Heart left ventricle (tissue), 16 donors: ENCODE measurements at regions of chr6 and their contacts with region 1.

Region 1: DNA sequence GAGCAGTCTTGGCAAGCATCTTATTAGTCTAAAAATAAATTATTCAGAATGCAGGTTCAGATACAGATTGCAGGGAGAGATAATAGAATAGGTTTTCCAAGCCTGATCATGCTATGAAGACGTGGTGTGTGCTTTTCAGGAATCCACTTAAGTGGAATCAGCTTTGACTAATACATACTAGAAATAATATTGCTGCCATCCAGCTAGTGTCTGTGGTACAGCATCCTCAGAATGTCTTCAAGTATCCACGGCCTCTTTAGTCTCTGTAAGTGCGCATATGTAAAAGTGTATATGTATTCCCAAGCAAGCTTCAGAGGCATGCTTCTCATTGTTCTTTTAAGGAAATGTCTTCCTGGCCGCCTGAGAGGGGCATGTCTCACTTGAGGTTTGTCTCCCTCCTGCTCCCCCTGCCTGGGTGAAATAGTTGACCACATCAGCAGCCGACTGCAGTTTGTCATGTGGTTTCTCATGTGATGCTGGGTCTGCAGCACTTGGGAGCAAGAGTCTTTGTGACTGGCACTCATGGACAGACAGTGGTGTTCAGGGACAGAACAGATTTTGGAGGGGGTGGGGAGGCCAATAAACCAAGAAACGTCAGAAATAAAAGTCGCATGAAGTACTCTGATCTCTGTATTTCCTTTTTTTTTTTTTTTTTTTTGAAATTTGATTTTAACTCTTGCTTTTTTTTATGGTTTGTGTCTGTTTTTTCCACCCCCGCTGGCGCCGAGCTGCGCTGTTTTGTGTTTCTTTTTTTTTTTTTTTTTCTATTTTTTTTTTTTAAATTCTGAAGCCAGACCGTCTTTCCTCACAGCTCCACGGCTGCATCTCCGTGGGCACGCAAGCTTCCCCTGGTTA is 150.8 kb downstream of the PRL start:
- DNase-seq: peak in 2 of 5 donors; percentile 25 to 27
- ATAC-seq: peak in 2 of 4 donors; percentile 42 to 46
- H3K4me3 ChIP-seq: peak overlapping the region in 9 of 12 donors; percentile 26 to 50 (median 40)
- H3K27ac ChIP-seq: peak overlapping the region in 1 of 12 donors; percentile 30
- H3K4me1 ChIP-seq: peaks cover 0 to 75% (median 50%) of the 10 kb centered on the region in 12 donors
- H3K27me3 ChIP-seq: no peaks in the 10 kb centered on the region
- CTCF ChIP-seq: peak in 8 of 12 donors; percentile 25 to 63 (median 43)
- POLR2A ChIP-seq: no peak

Region 2: DNA sequence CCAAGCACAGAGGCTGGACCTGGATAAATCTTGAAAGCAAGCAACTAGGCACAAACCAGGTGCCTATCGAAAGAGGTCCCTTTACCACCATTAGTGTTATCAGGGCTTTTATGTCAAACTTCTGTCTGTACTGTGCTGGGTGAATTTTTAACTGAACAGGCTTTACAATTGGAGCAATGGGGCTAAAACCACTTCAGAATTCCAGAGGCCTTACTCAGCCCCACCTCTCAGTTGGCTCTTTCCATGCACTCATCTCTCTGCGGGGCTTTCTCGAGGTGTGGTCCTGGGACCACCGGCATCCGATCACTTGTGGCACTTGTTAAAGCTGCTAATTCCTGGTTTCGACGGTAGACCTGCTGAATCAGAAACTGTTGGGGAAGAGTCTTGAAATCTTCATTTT is 320.0 kb before region 1 on chr6:
- intact Hi-C with region 1: no loop called
- DNase-seq: no peak
- ATAC-seq: no peak
- H3K4me3 ChIP-seq: no peak overlapping the region
- H3K27ac ChIP-seq: no peak overlapping the region
- H3K4me1 ChIP-seq: no peaks in the 10 kb centered on the region
- H3K27me3 ChIP-seq: no peaks in the 10 kb centered on the region
- CTCF ChIP-seq: no peak
- POLR2A ChIP-seq: no peak

Region 3: GRCh38 chr6:21987501-21987957 is 158.5 kb before region 1 on chr6:
- intact Hi-C with region 1: loop called in 3 of 10 experiments (anchors 5 to 10 kb)
- DNase-seq: peak; percentile 68 to 83 (median 80)
- ATAC-seq: peak; percentile 96 to 99 (median 98)
- H3K4me3 ChIP-seq: peak overlapping the region in 9 of 12 donors; percentile 5 to 42 (median 27)
- H3K27ac ChIP-seq: peak overlapping the region in 11 of 12 donors; percentile 35 to 83 (median 74)
- H3K4me1 ChIP-seq: peaks cover 0 to 33% (median 15%) of the 10 kb centered on the region in 12 donors
- H3K27me3 ChIP-seq: no peaks in the 10 kb centered on the region
- CTCF ChIP-seq: no peak
- POLR2A ChIP-seq: no peak

Region 4: GRCh38 chr6:22008248-22008836 is 137.7 kb before region 1 on chr6:
- intact Hi-C with region 1: no loop called
- DNase-seq: no peak
- ATAC-seq: no peak
- H3K4me3 ChIP-seq: no peak overlapping the region
- H3K27ac ChIP-seq: no peak overlapping the region
- H3K4me1 ChIP-seq: no peaks in the 10 kb centered on the region
- H3K27me3 ChIP-seq: no peaks in the 10 kb centered on the region
- CTCF ChIP-seq: no peak
- POLR2A ChIP-seq: no peak

Region 5: GRCh38 chr6:22043284-22043962 is 102.6 kb before region 1 on chr6:
- intact Hi-C with region 1: no loop called
- DNase-seq: peak in 4 of 5 donors; percentile 33 to 43 (median 36)
- ATAC-seq: peak; percentile 77 to 92 (median 88)
- H3K4me3 ChIP-seq: peak overlapping the region in 7 of 12 donors; percentile 14 to 42 (median 35)
- H3K27ac ChIP-seq: peak overlapping the region; percentile 29 to 80 (median 62)
- H3K4me1 ChIP-seq: peaks cover 0 to 30% (median 18%) of the 10 kb centered on the region in 12 donors
- H3K27me3 ChIP-seq: no peaks in the 10 kb centered on the region
- CTCF ChIP-seq: no peak
- POLR2A ChIP-seq: no peak

Region 6: DNA sequence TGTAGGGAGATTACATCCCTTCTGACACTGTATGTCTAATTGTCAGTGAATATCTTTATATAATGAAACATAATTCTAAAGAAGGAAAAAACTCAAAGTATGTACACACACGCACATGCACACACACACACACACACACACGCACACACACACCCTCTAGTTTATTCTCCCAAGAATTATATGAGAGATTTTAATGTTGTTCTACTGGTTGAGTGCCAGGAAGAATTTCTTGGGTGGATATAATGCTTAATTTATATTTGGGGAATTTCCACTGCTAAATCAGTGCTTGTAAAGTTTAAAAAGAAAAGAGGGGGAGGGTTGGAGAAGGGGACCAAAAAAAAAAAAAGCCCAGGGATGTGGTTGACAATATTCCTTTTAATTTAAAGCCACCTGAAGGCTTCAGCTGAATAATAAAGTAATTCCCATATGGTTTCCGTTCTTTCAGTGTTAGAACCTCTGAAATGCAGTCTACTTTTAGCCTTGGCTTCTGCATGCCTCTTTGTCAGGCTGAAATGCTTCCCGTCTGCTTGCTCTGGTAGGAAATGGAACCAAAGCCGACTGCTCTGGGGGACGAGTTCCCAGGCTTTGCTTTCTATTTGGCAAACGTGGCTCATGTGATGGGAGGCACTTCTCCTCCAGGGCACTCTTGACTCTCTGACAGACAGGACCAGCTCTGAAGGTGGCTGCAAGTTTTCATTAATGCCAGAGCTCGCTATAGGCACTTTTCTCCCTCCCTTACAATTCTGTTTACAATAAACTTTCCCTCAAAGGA is 74.6 kb before region 1 on chr6:
- intact Hi-C with region 1: loop called in 1 of 10 experiments (anchors 2 kb)
- DNase-seq: peak in 4 of 5 donors; percentile 57 to 75 (median 59)
- ATAC-seq: peak; percentile 79 to 94 (median 86)
- H3K4me3 ChIP-seq: peak overlapping the region in 9 of 12 donors; percentile 1 to 51 (median 24)
- H3K27ac ChIP-seq: peak overlapping the region; percentile 29 to 82 (median 66)
- H3K4me1 ChIP-seq: peaks cover 0 to 48% (median 19%) of the 10 kb centered on the region in 12 donors
- H3K27me3 ChIP-seq: no peaks in the 10 kb centered on the region
- CTCF ChIP-seq: no peak
- POLR2A ChIP-seq: no peak

Region 7: GRCh38 chr6:22239261-22239921 is 93.3 kb after region 1 on chr6:
- intact Hi-C with region 1: no loop called
- DNase-seq: no peak
- ATAC-seq: no peak
- H3K4me3 ChIP-seq: no peak overlapping the region
- H3K27ac ChIP-seq: no peak overlapping the region
- H3K4me1 ChIP-seq: no peaks in the 10 kb centered on the region
- H3K27me3 ChIP-seq: no peaks in the 10 kb centered on the region
- CTCF ChIP-seq: no peak
- POLR2A ChIP-seq: no peak

Region 8: DNA sequence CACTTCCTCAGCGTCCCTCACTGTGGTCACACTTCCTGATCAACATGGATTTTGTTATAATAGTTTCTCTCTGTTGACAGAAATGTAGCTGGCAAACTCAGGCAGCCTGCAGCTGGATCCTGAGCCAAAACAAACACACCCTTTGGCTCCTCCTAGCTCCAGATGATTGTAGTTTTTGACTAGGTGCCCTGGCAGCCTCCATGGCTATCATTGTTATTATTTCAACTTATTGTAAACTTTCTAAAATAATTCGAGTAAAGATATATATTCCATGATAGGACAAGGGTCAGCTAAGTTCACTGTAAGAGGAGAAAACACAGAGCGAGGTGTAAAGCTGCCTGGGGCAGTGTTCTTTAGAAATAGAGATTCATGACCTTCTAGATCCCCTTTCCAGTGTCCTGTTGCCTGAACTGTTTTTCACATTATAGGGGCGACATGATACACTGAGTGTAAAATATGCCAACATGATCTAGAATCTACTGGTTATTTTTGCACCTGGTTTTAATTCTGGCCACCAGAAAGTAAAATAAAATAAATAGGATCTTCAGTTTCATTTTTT is 325.2 kb after region 1 on chr6:
- intact Hi-C with region 1: loop called in 1 of 10 experiments (anchors 10 kb)
- DNase-seq: peak in 4 of 5 donors; percentile 38 to 69 (median 63)
- ATAC-seq: peak; percentile 85 to 93 (median 87)
- H3K4me3 ChIP-seq: peak overlapping the region in 2 of 12 donors; percentile 2 to 4
- H3K27ac ChIP-seq: peak overlapping the region in 11 of 12 donors; percentile 22 to 70 (median 40)
- H3K4me1 ChIP-seq: peaks cover 10 to 38% (median 22%) of the 10 kb centered on the region in 12 donors
- H3K27me3 ChIP-seq: no peaks in the 10 kb centered on the region
- CTCF ChIP-seq: peak in 8 of 12 donors; percentile 31 to 56 (median 40)
- POLR2A ChIP-seq: no peak

Region 9: GRCh38 chr6:22622351-22622750 is 476.3 kb after region 1 on chr6:
- intact Hi-C with region 1: loop called in 1 of 10 experiments (anchors 10 kb)
- DNase-seq: no peak
- ATAC-seq: no peak
- H3K4me3 ChIP-seq: no peak overlapping the region
- H3K27ac ChIP-seq: peak overlapping the region in 2 of 12 donors; percentile 10 to 46
- H3K4me1 ChIP-seq: peaks cover 0 to 24% (median 4%) of the 10 kb centered on the region in 12 donors
- H3K27me3 ChIP-seq: no peaks in the 10 kb centered on the region
- CTCF ChIP-seq: no peak
- POLR2A ChIP-seq: no peak

Region 10: DNA sequence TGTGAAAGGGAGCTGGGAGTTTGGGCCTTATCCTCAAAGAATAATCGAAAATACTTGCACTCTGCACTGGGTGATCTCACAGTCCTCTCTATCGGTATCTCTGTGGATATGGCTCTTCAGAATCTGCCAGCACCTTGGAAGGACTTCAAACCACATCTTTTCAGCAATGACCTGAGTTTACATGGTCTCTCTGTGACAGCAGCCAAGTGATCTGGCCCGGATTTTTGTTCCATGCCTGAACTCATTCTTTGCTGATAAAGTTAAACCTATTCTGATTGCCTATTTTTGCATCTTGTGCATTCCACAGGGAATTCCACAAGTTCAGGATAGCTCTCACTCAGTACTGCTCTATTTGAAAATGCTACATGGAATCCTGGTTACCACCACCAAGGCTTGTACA is 522.3 kb after region 1 on chr6:
- intact Hi-C with region 1: loop called in 1 of 10 experiments (anchors 5 kb)
- DNase-seq: peak in 4 of 5 donors; percentile 40 to 60 (median 48)
- ATAC-seq: peak; percentile 85 to 95 (median 92)
- H3K4me3 ChIP-seq: no peak overlapping the region
- H3K27ac ChIP-seq: peak overlapping the region; percentile 6 to 72 (median 51)
- H3K4me1 ChIP-seq: peaks cover 0 to 61% (median 39%) of the 10 kb centered on the region in 12 donors
- H3K27me3 ChIP-seq: no peaks in the 10 kb centered on the region
- CTCF ChIP-seq: no peak
- POLR2A ChIP-seq: no peak